ENCODE measurements at regions of chr17 and their contacts with region 1.

Region 1: GRCh38 chr17:5584383-5585286 is at the start of gene NLRP1:
- DNase-seq: peak; percentile 75
- H3K4me3 ChIP-seq: peak within 1 kb of the TSS; percentile 75
- H3K27ac ChIP-seq: peak within 1 kb of the TSS; percentile 91
- H3K27me3 ChIP-seq: no peaks in the 10 kb centered on the region
- CTCF ChIP-seq: no peak
- polyA plus RNA-seq, gene NLRP1: 73.2 and 80.5 TPM in 2 replicates

Region 2: DNA sequence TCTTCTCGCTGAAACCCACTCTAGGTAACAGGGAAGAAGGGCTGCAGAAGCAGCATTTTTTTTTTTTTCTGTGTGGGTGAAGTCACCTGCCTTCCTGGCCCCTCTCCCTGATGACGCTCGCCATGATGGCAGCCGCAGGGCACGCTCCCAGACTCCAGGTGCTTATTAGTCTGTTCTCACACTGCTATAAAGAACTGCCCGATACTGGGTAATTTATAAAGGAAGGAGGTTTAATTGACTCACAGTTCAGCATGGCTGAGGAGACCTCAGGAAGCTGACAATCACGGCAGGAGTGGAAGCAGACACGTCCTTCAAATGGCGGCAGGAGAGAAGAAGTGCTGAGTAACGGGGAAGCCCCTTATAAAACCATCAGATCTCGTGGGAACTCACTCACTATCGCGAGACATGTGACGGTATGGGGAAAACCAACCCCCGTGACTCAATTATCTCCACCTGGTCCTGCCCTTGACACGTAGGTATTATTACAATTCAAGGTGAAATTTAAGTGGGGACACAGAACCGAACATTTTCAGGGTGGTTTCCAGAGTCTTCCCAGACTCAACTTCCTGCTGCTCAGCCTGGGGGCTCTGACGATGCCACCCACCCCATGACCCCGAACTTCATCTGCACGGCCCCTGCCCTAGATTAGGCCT is 34.6 kb after region 1 on chr17:
- CTCF ChIA-PET with region 1: no interaction called
- POLR2A ChIA-PET with region 1: no interaction called
- DNase-seq: no peak
- H3K4me3 ChIP-seq: no peak overlapping the region
- H3K27ac ChIP-seq: no peak overlapping the region
- H3K27me3 ChIP-seq: peaks cover 7% of the 10 kb centered on the region
- CTCF ChIP-seq: no peak

Region 3: DNA sequence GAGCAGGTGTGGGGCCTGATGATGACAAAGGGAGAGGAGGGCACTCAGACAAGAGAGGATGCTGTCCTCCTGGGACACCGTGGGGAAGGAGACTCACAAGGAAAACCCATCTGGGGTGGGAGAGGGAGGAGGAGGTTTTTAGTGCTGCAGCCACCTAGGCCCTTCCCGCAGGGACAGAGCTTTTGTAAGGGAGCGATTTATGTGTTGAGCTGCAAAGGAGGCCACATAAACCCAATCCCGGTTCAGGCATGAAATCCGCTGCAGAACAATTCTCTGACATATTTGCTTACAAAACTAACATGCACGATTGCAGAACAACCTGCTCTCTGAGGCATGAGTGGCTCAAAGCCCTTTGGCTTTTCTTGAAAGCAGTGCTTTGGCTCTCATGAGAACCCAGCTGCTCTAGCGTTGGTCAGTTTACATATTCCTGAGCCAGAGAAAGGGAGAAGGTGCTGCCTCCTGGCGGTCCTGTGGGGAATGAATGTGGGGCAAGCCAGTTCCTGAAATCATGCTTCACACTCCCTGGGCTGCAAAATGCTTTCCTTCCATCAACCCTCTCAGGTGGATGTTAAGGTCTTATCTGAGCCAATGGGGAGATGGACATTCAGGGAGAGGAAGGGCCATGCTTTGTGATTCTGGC is 122.1 kb after region 1 on chr17:
- CTCF ChIA-PET with region 1: interaction called, 10 read pairs
- POLR2A ChIA-PET with region 1: no interaction called
- DNase-seq: peak; percentile 29
- H3K4me3 ChIP-seq: no peak overlapping the region
- H3K27ac ChIP-seq: no peak overlapping the region
- H3K27me3 ChIP-seq: peaks cover under 1% of the 10 kb centered on the region
- CTCF ChIP-seq: peak; percentile 90

Region 4: GRCh38 chr17:6421700-6422604 is 837.3 kb after region 1 on chr17:
- CTCF ChIA-PET with region 1: interaction called, 90 read pairs
- POLR2A ChIA-PET with region 1: no interaction called
- DNase-seq: peak; percentile 32
- H3K4me3 ChIP-seq: no peak overlapping the region
- H3K27ac ChIP-seq: no peak overlapping the region
- H3K27me3 ChIP-seq: peaks cover 12% of the 10 kb centered on the region
- CTCF ChIP-seq: peak; percentile 86

Measured in AG04450 (cell line).